ENCODE measurements at regions of chr4 and their contacts with region 1.

Region 1: GRCh38 chr4:41963105-41963504 is 18.5 kb upstream of the DCAF4L1 start:
- DNase-seq: no peak
- H3K4me3 Mint-ChIP-seq: no peak overlapping the region
- H3K27ac Mint-ChIP-seq: no peak overlapping the region
- H3K4me1 Mint-ChIP-seq: no peaks in the 10 kb centered on the region
- H3K27me3 Mint-ChIP-seq: no peaks in the 10 kb centered on the region

Region 2: DNA sequence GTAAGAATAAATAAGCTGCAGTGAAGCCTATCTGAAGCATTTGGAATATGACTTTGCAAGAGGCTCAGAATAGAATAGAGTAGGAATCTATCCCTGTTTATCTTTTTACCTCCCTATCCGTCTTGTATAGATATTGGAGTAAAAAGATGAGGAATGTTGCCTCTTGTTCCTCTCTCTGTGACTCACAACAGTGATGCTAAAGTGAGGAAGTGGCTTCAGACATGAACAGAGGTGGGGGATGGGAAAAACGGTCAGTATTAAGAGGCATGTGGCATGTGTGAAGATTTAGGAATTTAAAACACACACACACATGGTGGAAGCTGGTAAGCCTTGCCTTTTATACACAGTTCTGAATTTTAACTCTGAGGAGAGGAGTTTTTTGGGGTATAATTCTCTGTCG is 14.6 kb after region 1 on chr4:
- CTCF ChIA-PET with region 1: no interaction called
- intact Hi-C with region 1: loop called (anchors 1 kb)
- DNase-seq: no peak
- H3K4me3 Mint-ChIP-seq: no peak overlapping the region
- H3K27ac Mint-ChIP-seq: no peak overlapping the region
- H3K4me1 Mint-ChIP-seq: peaks cover 5% of the 10 kb centered on the region
- H3K27me3 Mint-ChIP-seq: peaks cover 2% of the 10 kb centered on the region